ENCODE measurements at regions of chr5 and their contacts with region 1.

Region 1: GRCh38 chr5:36734422-36734821 is 128.0 kb downstream of the SLC1A3 start:
- DNase-seq: no peak
- ATAC-seq: no peak

Region 2: DNA sequence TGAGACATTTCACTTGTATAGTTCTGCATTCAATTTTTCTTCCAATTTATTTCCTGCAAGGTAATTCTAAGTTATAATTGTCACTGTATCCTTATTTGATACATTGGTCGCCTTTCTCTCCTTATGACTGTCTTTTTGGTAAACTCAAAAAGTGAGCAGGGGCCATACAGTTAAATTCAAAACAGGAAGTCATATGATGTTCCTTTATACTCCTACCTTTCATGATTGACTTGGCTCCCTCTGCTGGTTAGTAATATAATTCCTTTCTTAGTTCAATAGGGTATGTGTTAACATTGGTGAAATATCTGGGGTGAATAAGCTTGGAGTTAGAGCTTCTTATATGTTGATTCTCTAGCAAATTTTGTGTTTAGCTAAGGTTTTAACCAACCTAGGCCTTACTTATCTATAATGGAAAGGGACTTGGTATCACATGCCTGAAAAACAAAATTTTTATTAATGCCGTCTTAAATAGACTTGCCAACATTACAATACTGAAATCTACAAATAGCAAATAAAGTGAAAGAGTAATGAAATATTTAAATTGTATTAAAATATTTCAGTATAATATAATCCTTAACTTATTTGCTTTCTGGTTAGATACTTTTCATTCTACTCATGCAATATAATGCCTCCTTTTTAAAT is 136.1 kb after region 1 on chr5:
- intact Hi-C with region 1: loop called (anchors 5 kb)
- DNase-seq: no peak
- ATAC-seq: peak; percentile 60

Region 3: DNA sequence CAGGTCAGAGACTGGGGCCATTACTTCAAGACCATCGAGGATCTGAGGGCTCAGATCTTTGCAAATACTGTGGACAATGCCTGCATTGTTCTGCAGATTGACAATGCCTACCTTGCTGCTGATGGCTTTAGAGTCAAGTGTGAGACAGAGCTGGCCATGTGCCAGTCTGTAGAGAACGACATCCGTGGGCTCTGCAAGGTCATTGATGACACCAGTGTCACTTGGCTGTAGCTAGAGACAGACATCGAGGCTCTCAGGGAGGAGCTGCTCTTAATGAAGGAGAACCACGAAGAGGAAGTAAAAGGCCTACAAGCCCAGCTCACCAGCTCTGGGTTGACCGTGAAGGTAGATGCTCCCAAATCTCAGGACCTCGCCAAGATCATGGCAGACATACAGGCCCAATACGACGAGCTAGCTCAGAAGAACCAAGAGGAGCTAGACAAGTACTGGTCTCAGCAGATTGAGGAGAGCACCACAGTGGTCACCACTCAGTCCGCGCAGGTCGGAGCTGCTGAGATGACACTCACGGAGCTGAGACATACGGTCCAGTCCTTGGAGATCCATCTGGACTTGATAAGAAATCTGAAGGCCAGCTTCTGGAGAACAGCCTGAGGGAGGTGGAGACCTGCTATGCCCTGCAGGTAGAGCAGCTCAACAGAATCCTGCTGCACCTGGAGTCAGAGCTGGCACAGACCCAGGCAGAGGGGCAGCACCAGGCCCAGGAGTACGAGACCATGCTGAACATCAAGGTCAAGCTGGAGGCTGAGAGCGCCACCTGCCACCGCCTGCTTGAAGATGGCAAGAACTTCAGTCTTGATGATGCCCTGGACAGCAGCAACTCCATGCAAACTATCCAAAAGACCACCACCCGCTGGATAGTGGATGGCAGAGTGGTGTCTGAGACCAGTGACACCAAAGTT is 151.4 kb after region 1 on chr5:
- intact Hi-C with region 1: no loop called
- DNase-seq: peak; percentile 53
- ATAC-seq: no peak

Region 4: GRCh38 chr5:37005946-37006540 is 271.6 kb after region 1 on chr5:
- intact Hi-C with region 1: loop called (anchors 2 kb)
- DNase-seq: no peak
- ATAC-seq: no peak